ENCODE measurements at regions of chr2 and their contacts with region 1.

Region 1: DNA sequence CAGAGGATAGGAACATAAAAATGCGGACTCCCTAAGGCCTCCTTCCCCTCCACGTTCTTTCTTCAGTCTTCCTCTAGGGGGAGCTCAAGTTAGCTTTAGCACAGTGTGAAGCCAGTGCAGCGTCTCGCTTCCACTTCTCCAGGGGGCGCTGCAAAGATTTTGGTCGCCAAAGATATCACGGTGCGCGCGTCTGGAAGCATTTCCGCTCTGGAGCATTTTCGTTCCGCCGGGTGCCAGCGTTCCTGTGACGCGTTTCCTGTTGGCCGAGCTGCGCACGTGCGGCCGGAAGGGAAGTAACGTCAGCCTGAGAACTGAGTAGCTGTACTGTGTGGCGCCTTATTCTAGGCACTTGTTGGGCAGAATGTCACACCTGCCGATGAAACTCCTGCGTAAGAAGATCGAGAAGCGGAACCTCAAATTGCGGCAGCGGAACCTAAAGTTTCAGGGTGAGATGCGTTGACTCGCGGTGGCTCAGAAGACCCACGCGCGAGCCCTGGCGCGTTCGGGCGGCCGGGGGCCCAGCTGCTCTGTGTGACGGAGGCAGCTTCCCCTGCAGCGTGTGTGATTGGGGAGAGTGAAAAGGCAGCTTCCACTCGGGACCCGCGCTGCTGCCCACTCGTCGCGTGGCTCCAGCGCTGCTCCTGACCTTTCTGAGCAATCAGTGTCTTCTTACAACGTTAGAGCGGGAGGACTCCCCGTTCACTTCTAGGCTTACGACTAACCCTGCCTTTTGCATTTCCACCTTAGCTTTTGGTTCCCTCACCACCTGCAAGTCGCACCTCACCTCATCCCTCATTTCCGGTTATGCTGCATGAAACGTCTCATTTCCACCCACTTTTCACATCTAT is at the start of gene DDX18:
- DNase-seq: peak; percentile 99
- H3K4me3 Mint-ChIP-seq: peak within 1 kb of the TSS; percentile 91
- H3K27ac Mint-ChIP-seq: peak within 1 kb of the TSS; percentile 97
- H3K4me1 Mint-ChIP-seq: peaks cover 42% of the 10 kb centered on the region
- H3K27me3 Mint-ChIP-seq: no peaks in the 10 kb centered on the region
- total RNA-seq, gene DDX18: 106 to 119 TPM

Region 2: GRCh38 chr2:117825437-117825836 is 10.8 kb after region 1 on chr2:
- CTCF ChIA-PET with region 1: interaction called, 14 read pairs
- intact Hi-C with region 1: no loop called
- DNase-seq: no peak
- H3K4me3 Mint-ChIP-seq: no peak overlapping the region
- H3K27ac Mint-ChIP-seq: no peak overlapping the region
- H3K4me1 Mint-ChIP-seq: peaks cover 6% of the 10 kb centered on the region
- H3K27me3 Mint-ChIP-seq: no peaks in the 10 kb centered on the region

Region 3: DNA sequence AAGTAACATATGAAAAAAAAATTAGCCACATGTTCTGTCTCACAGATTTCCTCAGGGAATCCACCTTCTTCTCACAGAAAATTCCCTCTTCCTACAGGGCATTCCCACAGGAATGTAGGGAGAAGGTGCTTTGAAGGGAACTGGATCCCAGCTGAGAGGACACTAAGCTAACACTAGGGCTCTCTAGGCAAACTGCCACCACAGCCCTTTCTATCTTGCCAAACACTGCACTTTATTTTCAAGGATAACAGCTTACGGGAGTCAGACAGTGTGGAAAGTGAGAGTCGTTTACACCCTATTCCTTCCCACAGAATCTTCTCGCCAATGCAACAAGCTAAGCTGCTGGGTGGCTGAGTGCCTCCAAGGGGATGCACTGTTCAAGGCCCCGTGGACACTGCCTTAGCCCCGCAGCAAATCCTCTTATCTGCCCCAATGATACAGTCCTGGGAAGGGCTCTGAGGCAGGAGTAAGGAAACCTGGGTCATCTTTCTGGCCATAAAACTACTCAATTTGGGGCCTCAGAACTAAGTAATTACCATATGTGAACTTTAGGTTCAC is 122.3 kb after region 1 on chr2:
- CTCF ChIA-PET with region 1: no interaction called
- intact Hi-C with region 1: loop called (anchors 5 kb)
- DNase-seq: no peak
- H3K4me3 Mint-ChIP-seq: no peak overlapping the region
- H3K27ac Mint-ChIP-seq: no peak overlapping the region
- H3K4me1 Mint-ChIP-seq: no peaks in the 10 kb centered on the region
- H3K27me3 Mint-ChIP-seq: no peaks in the 10 kb centered on the region

Region 4: GRCh38 chr2:117960231-117960630 is 145.6 kb after region 1 on chr2:
- CTCF ChIA-PET with region 1: no interaction called
- intact Hi-C with region 1: no loop called
- DNase-seq: no peak
- H3K4me3 Mint-ChIP-seq: no peak overlapping the region
- H3K27ac Mint-ChIP-seq: no peak overlapping the region
- H3K4me1 Mint-ChIP-seq: no peaks in the 10 kb centered on the region
- H3K27me3 Mint-ChIP-seq: no peaks in the 10 kb centered on the region

Region 5: GRCh38 chr2:118013724-118014491 is 199.3 kb after region 1 on chr2 and contains the start of gene CCDC93:
- CTCF ChIA-PET with region 1: interaction called, 5 read pairs
- intact Hi-C with region 1: loop called (anchors 1 kb)
- DNase-seq: peak; percentile 85
- H3K4me3 Mint-ChIP-seq: peak within 1 kb of the TSS; percentile 95
- H3K27ac Mint-ChIP-seq: peak within 1 kb of the TSS; percentile 83
- H3K4me1 Mint-ChIP-seq: peaks cover 38% of the 10 kb centered on the region
- H3K27me3 Mint-ChIP-seq: no peaks in the 10 kb centered on the region
- total RNA-seq, gene CCDC93: 29.0 to 32.8 TPM

Region 6: GRCh38 chr2:118186110-118186857 is 371.6 kb after region 1 on chr2:
- CTCF ChIA-PET with region 1: no interaction called
- intact Hi-C with region 1: loop called (anchors 1 kb)
- DNase-seq: peak; percentile 90
- H3K4me3 Mint-ChIP-seq: peak overlapping the region; percentile 92
- H3K27ac Mint-ChIP-seq: peak overlapping the region; percentile 97
- H3K4me1 Mint-ChIP-seq: peaks cover 14% of the 10 kb centered on the region
- H3K27me3 Mint-ChIP-seq: no peaks in the 10 kb centered on the region

Region 7: DNA sequence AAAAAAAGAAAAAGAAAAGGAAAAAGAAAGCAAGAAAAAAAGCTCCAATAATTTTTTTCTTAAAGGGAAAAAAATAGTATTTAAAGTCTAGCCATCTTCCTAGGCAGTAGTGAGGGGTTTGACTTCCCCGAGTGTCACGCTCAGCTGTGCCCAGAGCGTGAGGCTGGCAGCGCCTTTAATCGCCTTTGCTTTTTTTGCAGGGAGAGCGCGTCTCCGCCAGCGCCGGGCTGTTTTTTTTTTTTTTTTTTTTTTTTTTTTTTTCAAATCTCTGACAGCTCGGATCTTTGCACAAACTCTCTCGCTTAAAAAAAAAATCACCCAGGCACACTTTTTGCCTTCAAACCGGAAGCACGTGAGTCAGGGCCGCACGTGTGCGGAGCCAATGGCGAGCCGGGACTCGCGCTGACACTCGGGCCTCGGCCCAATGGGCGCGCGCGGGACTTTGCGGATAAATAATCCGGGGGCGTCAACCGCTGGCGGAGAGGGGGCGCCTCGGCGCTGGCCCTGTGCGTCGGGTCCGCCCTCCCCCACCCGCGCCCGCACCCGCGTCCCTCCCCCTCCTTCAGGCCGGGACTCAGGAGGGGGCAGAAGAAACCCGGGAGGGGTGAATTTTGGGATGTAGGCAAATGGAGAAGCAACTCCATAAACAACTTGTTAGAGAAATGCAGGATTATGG is 1033.0 kb after region 1 on chr2 and contains the start of gene EN1:
- CTCF ChIA-PET with region 1: no interaction called
- intact Hi-C with region 1: loop called (anchors 10 kb)
- DNase-seq: peak; percentile 40
- H3K4me3 Mint-ChIP-seq: peak within 1 kb of the TSS; percentile 52
- H3K27ac Mint-ChIP-seq: no peak within 1 kb of the TSS
- H3K4me1 Mint-ChIP-seq: peaks cover 37% of the 10 kb centered on the region
- H3K27me3 Mint-ChIP-seq: peaks cover 79% of the 10 kb centered on the region
- total RNA-seq, gene EN1: not detected